ENCODE measurements at regions of chr6 and their contacts with region 1.

Region 1: GRCh38 chr6:56637640-56638039 is 5.0 kb downstream of the DST start:
- DNase-seq: no peak
- ATAC-seq: peak in 3 of 4 donors; percentile 75 to 79 (median 76)
- H3K4me3 ChIP-seq: no peak overlapping the region
- H3K27ac ChIP-seq: no peak overlapping the region
- H3K4me1 ChIP-seq: no peaks in the 10 kb centered on the region
- H3K27me3 ChIP-seq: no peaks in the 10 kb centered on the region
- CTCF ChIP-seq: peak in 3 of 4 donors; percentile 33 to 51 (median 43)

Region 2: DNA sequence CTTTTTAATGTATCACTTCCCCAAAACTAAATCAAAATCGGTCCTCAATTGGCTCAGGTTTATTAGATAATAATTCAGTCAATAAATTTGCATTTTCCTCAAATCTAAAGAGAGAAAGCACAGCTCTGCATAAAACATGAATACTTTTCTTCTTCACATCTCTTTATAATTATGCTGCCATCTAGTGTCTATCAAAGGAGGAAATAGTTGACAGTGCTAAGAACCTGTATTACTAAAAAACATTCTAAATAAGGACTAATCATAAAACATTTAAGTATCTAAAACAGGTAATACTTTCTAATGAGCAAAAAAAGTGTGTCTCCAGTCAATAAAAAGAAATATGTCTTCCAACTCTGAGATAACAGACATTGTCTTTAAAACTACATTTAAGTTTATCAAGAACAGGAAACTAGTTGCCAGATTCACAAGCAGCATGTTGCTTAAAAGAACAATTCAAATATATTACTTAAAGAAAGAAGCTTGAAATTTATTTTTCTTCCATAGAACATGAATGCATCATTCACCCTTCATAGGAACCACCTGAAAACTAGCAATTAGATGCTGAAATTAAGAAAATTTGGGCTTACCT is 61.5 kb after region 1 on chr6:
- intact Hi-C with region 1: loop called in 1 of 3 experiments (anchors 5 kb)
- DNase-seq: no peak
- ATAC-seq: peak; percentile 40 to 86 (median 80)
- H3K4me3 ChIP-seq: no peak overlapping the region
- H3K27ac ChIP-seq: no peak overlapping the region
- H3K4me1 ChIP-seq: peaks cover 0 to 3% (median 0%) of the 10 kb centered on the region in 3 donors
- H3K27me3 ChIP-seq: no peaks in the 10 kb centered on the region
- CTCF ChIP-seq: peak in 2 of 4 donors; percentile 35

Region 3: GRCh38 chr6:56757588-56757984 is 119.9 kb after region 1 on chr6:
- intact Hi-C with region 1: loop called in 2 of 3 experiments (anchors 10 kb)
- DNase-seq: peak in 2 of 6 donors; percentile 30 to 52
- ATAC-seq: peak; percentile 66 to 94 (median 86)
- H3K4me3 ChIP-seq: no peak overlapping the region
- H3K27ac ChIP-seq: no peak overlapping the region
- H3K4me1 ChIP-seq: peaks cover 0 to 11% (median 0%) of the 10 kb centered on the region in 3 donors
- H3K27me3 ChIP-seq: no peaks in the 10 kb centered on the region
- CTCF ChIP-seq: peak in 2 of 4 donors; percentile 10 to 11

Region 4: DNA sequence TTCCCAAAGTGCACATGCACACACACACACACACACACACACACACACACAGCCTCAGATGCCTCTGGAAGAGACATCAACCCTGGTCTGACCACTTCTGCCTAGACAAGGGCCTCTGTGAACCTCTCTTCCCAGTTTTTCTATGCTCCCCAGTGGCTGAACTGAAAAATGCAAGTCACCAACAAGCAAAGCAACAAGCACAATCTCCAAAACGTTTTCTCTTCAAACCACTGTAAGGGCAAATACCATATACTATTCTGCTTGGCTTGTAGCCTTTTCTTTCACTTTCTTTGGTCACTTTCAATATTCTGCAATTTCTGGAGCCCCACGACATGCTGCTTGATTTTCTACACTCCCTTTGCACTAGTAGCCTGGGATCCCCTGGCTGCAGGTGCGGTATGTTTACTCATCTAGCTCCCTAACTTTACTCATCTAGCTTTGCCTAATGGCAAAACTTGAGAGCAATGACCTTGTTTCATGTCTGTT is 126.5 kb after region 1 on chr6:
- intact Hi-C with region 1: loop called in 2 of 3 experiments (anchors 10 kb)
- DNase-seq: no peak
- ATAC-seq: peak in 3 of 4 donors; percentile 56 to 74 (median 60)
- H3K4me3 ChIP-seq: no peak overlapping the region
- H3K27ac ChIP-seq: no peak overlapping the region
- H3K4me1 ChIP-seq: no peaks in the 10 kb centered on the region
- H3K27me3 ChIP-seq: no peaks in the 10 kb centered on the region
- CTCF ChIP-seq: no peak

Region 5: GRCh38 chr6:56843573-56844349 is 206.1 kb after region 1 on chr6:
- intact Hi-C with region 1: loop called in 1 of 3 experiments (anchors 5 kb)
- DNase-seq: peak; percentile 30 to 78 (median 46)
- ATAC-seq: peak; percentile 80 to 92 (median 91)
- H3K4me3 ChIP-seq: peak overlapping the region; percentile 31 to 56 (median 37)
- H3K27ac ChIP-seq: peak overlapping the region in 3 of 4 donors; percentile 31 to 77 (median 67)
- H3K4me1 ChIP-seq: no peaks in the 10 kb centered on the region
- H3K27me3 ChIP-seq: peaks cover 0 to 16% (median 3%) of the 10 kb centered on the region in 4 donors
- CTCF ChIP-seq: peak in 1 of 4 donors; percentile 14

Measured in pancreas (tissue), 10 donors.